Activated CD4-positive, alpha-beta T cell treated with anti-CD3 and anti-CD28 coated beads, Interleukin-2, amount 10 ng/mL, durations not matched to agents 24 days and 14 days (primary cell): ENCODE measurements at regions of chr2 and their contacts with region 1.

Region 1: DNA sequence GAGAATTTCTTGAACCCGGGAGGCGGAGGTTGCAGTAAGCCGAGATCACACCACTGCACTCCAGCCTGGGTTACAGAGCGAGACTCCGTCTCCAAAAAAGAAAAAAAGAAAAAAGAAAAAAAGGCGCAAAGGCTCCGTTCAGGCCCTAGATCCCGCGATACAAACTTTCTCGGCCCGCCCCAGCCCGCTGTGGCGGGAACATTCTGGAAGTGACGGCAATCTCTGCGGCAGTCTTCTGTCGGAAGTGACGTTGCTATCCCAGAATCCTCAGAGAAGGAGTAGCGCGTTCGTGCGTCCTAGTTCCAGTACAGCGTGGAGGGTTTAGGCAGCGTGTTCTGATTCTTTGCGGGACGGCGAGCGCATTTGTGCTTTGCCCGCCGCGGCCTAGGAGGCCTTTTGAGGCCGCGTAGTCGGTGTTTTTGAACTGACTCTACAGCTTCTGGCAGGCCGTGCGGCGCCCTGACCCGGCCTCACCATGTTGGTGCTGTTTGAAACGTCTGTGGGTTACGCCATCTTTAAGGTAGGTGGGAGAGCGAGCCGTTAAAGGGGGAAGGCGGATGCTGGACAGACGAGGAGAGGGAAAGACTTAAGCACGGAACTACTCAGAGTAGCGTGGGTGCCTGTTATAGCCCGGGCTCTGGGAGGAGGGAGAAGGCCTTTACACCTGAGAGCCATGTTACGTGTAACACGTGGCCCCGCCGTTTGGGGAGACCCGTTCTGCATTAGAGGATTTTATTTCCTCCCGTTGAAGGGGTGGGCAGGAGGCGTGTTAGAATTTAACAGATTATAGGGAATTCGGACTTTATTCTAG is at the start of gene NOP58:
- DNase-seq: peak; percentile 98
- H3K4me3 Mint-ChIP-seq: peak within 1 kb of the TSS; percentile 65
- H3K27ac Mint-ChIP-seq: peak within 1 kb of the TSS; percentile 80
- H3K4me1 Mint-ChIP-seq: peaks cover 19% of the 10 kb centered on the region
- H3K27me3 Mint-ChIP-seq: no peaks in the 10 kb centered on the region
- total RNA-seq, gene NOP58: 221 and 228 TPM in 2 replicates

Region 2: DNA sequence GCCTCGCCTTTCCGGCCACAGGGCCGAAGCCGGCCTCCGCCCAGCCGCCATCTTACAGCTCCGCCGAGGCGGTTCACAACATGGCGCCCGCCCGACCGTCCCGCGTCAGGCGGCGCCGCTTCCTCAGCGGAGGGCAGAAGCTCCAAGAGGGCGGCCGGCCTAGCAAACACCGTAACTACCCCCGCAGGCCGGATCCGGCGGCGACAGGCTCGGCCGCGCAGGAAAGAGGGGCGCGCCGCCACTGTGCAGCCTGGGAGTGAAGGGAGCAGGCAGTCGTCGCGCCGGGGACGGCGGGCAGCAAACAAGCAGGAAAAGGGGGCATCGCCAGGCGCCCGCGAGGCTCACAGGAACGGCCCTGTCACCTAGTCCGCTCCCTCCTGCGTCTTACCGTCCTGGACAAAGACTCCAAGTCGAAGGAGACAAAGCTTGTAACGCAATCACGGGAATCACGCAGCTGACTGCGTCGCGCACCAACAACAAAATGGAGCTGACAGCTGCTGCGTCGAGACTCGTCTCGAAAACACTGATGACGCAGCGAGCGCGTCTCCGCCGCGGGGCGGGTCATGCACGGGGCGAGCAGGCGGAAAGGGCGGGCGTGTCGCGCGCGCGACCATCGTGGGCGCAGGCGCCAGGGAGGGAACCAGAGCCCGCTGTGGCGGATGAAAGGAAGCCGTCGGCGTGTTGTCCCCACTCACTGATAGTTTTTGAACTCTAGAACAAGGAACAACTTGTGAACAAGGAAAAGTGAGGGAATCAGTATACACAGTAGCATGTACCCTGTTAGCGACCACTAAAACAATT is 1401.3 kb before region 1 on chr2 and contains the start of gene CLK1:
- intact Hi-C with region 1: loop called (anchors 10 kb)
- DNase-seq: peak; percentile 99
- H3K4me3 Mint-ChIP-seq: peak within 1 kb of the TSS; percentile 91
- H3K27ac Mint-ChIP-seq: peak within 1 kb of the TSS; percentile 94
- H3K4me1 Mint-ChIP-seq: peaks cover 32% of the 10 kb centered on the region
- H3K27me3 Mint-ChIP-seq: no peaks in the 10 kb centered on the region
- total RNA-seq, gene CLK1: 99.3 and 100 TPM in 2 replicates

Region 3: GRCh38 chr2:201642579-201643215 is 623.0 kb before region 1 on chr2:
- intact Hi-C with region 1: loop called (anchors 2 kb)
- DNase-seq: peak; percentile 97
- H3K4me3 Mint-ChIP-seq: peak overlapping the region; percentile 84
- H3K27ac Mint-ChIP-seq: peak overlapping the region; percentile 87
- H3K4me1 Mint-ChIP-seq: peaks cover 14% of the 10 kb centered on the region
- H3K27me3 Mint-ChIP-seq: peaks cover 3% of the 10 kb centered on the region

Region 4: DNA sequence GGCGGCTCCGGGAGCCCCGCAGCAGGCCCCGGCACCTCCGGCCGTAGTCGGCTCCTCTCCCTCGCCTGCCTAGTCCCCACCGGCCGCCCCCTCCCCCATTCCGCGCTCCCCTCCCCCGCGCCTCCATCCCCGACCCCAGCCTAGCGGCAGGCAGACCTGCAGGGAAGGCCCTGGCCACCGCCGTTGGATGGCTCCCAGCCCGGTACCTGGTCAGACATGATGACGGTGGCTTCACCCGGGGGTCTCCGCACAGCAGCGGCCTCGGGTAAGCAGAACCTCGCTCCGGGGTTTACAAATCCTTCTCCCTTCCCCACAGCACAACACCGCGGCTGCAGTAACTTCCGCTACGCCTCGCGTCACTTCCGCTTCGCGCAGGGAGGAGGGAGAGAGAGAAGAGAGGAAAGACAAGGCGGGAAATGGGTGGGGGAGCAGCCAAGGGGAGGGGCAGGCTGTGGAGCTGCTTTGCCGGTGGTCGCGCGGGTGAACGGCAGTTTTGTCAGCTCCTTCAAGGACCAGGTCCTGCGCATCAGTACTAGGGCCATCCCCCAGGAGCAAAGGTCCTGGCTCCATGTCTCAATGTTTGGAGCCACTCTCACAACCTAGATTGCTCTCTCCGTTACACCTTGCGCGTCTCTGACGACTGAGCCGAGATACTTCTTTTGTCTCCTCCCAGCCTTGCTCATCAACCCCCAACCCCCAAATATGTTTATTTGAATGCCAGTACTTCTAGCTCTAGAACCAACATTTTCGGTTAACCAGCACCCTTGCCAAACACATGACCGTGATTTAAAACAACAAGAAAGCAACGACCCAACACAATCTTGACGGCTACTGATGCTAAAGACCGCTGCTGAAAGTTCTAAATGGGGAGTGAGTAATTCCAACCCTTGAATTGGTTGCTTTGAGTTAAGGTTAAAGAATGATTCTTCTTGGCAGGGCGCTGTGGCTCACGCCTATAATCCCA is 27.2 kb before region 1 on chr2 and contains the start of gene SUMO1:
- intact Hi-C with region 1: loop called (anchors 1 kb)
- DNase-seq: peak; percentile 98
- H3K4me3 Mint-ChIP-seq: peak within 1 kb of the TSS; percentile 94
- H3K27ac Mint-ChIP-seq: peak within 1 kb of the TSS; percentile 92
- H3K4me1 Mint-ChIP-seq: peaks cover 16% of the 10 kb centered on the region
- H3K27me3 Mint-ChIP-seq: no peaks in the 10 kb centered on the region
- total RNA-seq, gene SUMO1: 121 and 127 TPM in 2 replicates

Region 5: DNA sequence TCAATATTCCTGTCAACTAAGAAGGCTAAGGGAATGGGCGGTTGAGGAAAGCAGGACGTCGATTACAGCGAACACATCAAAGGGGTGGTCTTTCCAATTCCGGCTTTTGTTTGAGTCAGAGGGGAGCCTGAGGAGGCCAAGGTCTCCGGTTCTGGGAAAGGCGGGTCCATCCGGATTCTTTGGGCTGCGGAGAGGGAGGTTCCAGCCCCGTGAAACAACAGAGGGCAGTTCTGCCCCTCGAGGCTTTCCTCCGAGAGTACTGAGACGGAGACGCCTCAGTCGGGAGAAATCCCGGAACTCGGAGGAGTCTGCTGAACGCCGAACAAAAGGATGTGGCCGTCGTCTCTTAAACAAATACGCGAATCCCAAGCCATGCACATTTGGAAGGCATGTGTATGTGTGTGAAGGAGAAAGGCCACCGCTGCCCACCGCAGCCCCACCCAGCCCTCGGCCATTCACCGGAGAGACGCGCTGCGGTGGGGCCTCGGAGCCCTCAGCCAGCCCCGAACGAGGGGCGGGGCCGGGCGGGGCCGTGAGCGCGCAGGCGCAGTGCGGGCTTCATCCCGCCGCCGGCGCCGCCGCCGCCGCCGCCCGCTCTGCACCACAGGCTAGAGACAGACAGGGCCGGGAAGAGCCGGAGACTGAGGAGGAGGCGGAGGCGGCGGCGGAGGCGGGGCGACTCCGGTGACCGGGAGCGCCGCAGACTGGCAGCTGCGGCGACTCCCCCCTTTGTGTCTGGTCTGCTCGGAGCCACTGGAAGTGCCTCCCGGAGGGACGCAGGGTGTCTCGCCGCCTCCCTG is 110.1 kb after region 1 on chr2 and contains the start of gene BMPR2:
- intact Hi-C with region 1: loop called (anchors 2 kb)
- DNase-seq: peak; percentile 96
- H3K4me3 Mint-ChIP-seq: peak within 1 kb of the TSS; percentile 95
- H3K27ac Mint-ChIP-seq: peak within 1 kb of the TSS; percentile 85
- H3K4me1 Mint-ChIP-seq: peaks cover 25% of the 10 kb centered on the region
- H3K27me3 Mint-ChIP-seq: peaks cover 10% of the 10 kb centered on the region
- total RNA-seq, gene BMPR2: 5.4 and 6.3 TPM in 2 replicates

Region 6: GRCh38 chr2:203934041-203934492 is 1668.4 kb after region 1 on chr2:
- intact Hi-C with region 1: no loop called
- DNase-seq: peak; percentile 86
- H3K4me3 Mint-ChIP-seq: peak overlapping the region; percentile 79
- H3K27ac Mint-ChIP-seq: peak overlapping the region; percentile 92
- H3K4me1 Mint-ChIP-seq: peaks cover 37% of the 10 kb centered on the region
- H3K27me3 Mint-ChIP-seq: no peaks in the 10 kb centered on the region